ENCODE measurements at regions of chr12 and their contacts with region 1.

Region 1: GRCh38 chr12:105585107-105585506 is 254.6 kb downstream of the C12orf75 start:
- H3K4me3 Mint-ChIP-seq: no peak overlapping the region
- H3K27ac Mint-ChIP-seq: no peak overlapping the region
- H3K4me1 Mint-ChIP-seq: no peaks in the 10 kb centered on the region
- H3K27me3 Mint-ChIP-seq: no peaks in the 10 kb centered on the region

Region 2: DNA sequence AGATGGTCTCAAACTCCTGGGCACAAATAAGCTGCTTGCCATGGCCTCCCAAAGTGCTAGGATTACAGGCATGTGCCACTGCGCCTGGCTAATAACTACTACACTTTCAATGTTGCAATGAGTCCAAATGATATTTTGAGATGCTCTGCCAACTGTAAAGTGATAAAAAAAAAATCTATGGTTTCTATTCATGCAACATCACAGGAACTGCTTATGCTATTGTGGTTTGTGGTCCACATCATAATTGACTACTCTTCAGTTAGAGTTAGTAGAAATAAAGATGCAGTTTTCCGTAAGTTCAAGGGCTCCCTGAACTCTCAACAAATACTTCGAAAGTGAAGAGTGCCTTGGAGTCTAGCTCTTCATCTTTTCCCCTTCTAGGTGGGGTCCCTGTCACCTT is 15.2 kb before region 1 on chr12:
- intact Hi-C with region 1: loop called (anchors 2 kb)
- H3K4me3 Mint-ChIP-seq: no peak overlapping the region
- H3K27ac Mint-ChIP-seq: no peak overlapping the region
- H3K4me1 Mint-ChIP-seq: no peaks in the 10 kb centered on the region
- H3K27me3 Mint-ChIP-seq: no peaks in the 10 kb centered on the region